Activated CD4-positive, alpha-beta memory T cell treated with anti-CD3 and anti-CD28 coated beads for 36 hours (primary cell): ENCODE measurements at regions of chr1 and their contacts with region 1.

Region 1: GRCh38 chr1:66929999-66930822 is 5.4 kb downstream of the MIER1 start:
- DNase-seq: peak; percentile 96
- H3K4me3 Mint-ChIP-seq: peak overlapping the region; percentile 90
- H3K27ac Mint-ChIP-seq: peak overlapping the region; percentile 96
- H3K4me1 Mint-ChIP-seq: peaks cover 57% of the 10 kb centered on the region
- H3K27me3 Mint-ChIP-seq: no peaks in the 10 kb centered on the region

Region 2: DNA sequence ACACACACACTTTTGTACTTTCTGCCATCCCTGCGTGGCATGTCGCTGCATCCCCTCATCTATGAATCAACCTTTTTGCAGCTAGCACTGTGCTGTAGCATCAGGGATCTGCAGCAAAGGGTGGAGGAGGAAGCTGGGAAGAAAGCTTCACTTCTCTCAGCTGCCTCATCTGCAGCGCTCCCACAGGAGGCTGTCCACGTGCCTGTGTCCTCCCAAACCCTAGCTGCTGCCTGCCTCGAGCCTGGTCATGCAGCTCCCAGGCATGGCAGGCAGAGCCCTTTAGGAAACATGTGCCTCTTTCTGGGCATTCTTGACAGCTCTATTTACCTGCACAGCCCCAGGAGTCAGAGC is 658.3 kb before region 1 on chr1:
- CTCF ChIA-PET with region 1: no interaction called
- POLR2A ChIA-PET with region 1: no interaction called
- intact Hi-C with region 1: no loop called
- DNase-seq: no peak
- H3K4me3 Mint-ChIP-seq: peak overlapping the region; percentile 40
- H3K27ac Mint-ChIP-seq: peak overlapping the region; percentile 85
- H3K4me1 Mint-ChIP-seq: peaks cover 63% of the 10 kb centered on the region
- H3K27me3 Mint-ChIP-seq: no peaks in the 10 kb centered on the region

Region 3: GRCh38 chr1:66725885-66726665 is 204.1 kb before region 1 on chr1:
- CTCF ChIA-PET with region 1: no interaction called
- POLR2A ChIA-PET with region 1: no interaction called
- intact Hi-C with region 1: no loop called
- DNase-seq: peak; percentile 61
- H3K4me3 Mint-ChIP-seq: no peak overlapping the region
- H3K27ac Mint-ChIP-seq: no peak overlapping the region
- H3K4me1 Mint-ChIP-seq: peaks cover 10% of the 10 kb centered on the region
- H3K27me3 Mint-ChIP-seq: peaks cover 8% of the 10 kb centered on the region

Region 4: DNA sequence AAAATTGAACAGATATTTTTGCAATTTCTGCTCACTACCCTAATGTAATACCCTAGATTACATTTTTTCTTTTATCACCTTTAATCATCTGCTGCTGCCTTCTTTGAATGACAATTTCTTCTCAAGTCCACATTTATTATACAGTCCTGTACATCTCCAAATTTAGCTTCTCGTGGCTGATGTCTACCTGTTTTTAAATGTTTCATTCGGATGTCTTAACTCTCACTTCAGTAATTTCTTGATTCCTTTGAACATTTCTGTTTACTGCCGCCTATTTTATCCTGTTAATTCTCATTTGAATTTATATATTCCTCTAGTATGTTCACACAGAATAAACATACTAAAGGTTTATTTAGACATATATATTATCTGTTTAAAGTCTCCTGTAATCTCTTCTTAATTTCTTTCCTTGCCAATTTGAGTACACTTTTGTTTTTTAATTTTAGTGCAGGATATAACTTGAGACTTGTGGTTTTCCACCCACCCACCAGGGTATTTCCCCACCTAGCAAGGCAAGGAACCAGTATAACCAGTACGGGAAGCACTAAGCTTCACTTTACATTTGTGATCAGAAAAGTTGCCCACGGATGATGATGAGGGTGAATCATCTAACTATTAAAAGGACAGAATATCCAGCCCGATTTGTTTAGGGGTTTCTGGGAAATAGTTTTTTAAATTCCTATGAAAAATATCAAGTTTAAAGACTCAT is 141.8 kb before region 1 on chr1:
- CTCF ChIA-PET with region 1: no interaction called
- POLR2A ChIA-PET with region 1: no interaction called
- intact Hi-C with region 1: loop called (anchors 2 kb)
- DNase-seq: peak; percentile 78
- H3K4me3 Mint-ChIP-seq: peak overlapping the region; percentile 44
- H3K27ac Mint-ChIP-seq: peak overlapping the region; percentile 62
- H3K4me1 Mint-ChIP-seq: peaks cover 14% of the 10 kb centered on the region
- H3K27me3 Mint-ChIP-seq: no peaks in the 10 kb centered on the region

Region 5: GRCh38 chr1:66954208-66954607 is 24.0 kb after region 1 on chr1:
- CTCF ChIA-PET with region 1: interaction called, 3 read pairs
- POLR2A ChIA-PET with region 1: interaction called, 7 read pairs
- intact Hi-C with region 1: loop called (anchors 1 kb)
- DNase-seq: no peak
- H3K4me3 Mint-ChIP-seq: no peak overlapping the region
- H3K27ac Mint-ChIP-seq: peak overlapping the region; percentile 74
- H3K4me1 Mint-ChIP-seq: peaks cover 47% of the 10 kb centered on the region
- H3K27me3 Mint-ChIP-seq: no peaks in the 10 kb centered on the region

Region 6: GRCh38 chr1:67171978-67172377 is 241.8 kb after region 1 on chr1:
- CTCF ChIA-PET with region 1: no interaction called
- POLR2A ChIA-PET with region 1: interaction called, 3 read pairs
- intact Hi-C with region 1: loop called (anchors 5 kb)
- DNase-seq: no peak
- H3K4me3 Mint-ChIP-seq: peak overlapping the region; percentile 74
- H3K27ac Mint-ChIP-seq: peak overlapping the region; percentile 99
- H3K4me1 Mint-ChIP-seq: peaks cover 72% of the 10 kb centered on the region
- H3K27me3 Mint-ChIP-seq: peaks cover 5% of the 10 kb centered on the region